ENCODE measurements at regions of chr17 and their contacts with region 1.

Region 1: GRCh38 chr17:73349138-73349537 is 37.3 kb upstream of the CDC42EP4 start:
- DNase-seq: no peak
- H3K4me3 ChIP-seq: no peak overlapping the region
- H3K27ac ChIP-seq: no peak overlapping the region
- H3K4me1 ChIP-seq: peaks cover 5% of the 10 kb centered on the region
- H3K27me3 ChIP-seq: no peaks in the 10 kb centered on the region
- CTCF ChIP-seq: no peak

Region 2: GRCh38 chr17:73261952-73262675 is 87.0 kb before region 1 on chr17:
- CTCF ChIA-PET with region 1: interaction called, 13 read pairs
- POLR2A ChIA-PET with region 1: no interaction called
- intact Hi-C with region 1: no loop called
- DNase-seq: no peak
- H3K4me3 ChIP-seq: no peak overlapping the region
- H3K27ac ChIP-seq: no peak overlapping the region
- H3K4me1 ChIP-seq: peaks cover 2% of the 10 kb centered on the region; the same call in 1 of the 2 replicates
- H3K27me3 ChIP-seq: no peaks in the 10 kb centered on the region
- CTCF ChIP-seq: no peak

Region 3: GRCh38 chr17:73803964-73804435 is 454.9 kb after region 1 on chr17:
- CTCF ChIA-PET with region 1: no interaction called
- POLR2A ChIA-PET with region 1: no interaction called
- intact Hi-C with region 1: no loop called
- DNase-seq: no peak
- H3K4me3 ChIP-seq: no peak overlapping the region
- H3K27ac ChIP-seq: no peak overlapping the region
- H3K4me1 ChIP-seq: no peaks in the 10 kb centered on the region
- H3K27me3 ChIP-seq: peaks cover 39% of the 10 kb centered on the region
- CTCF ChIP-seq: no peak